ENCODE measurements at regions of chr17 and their contacts with region 1.

Region 1: DNA sequence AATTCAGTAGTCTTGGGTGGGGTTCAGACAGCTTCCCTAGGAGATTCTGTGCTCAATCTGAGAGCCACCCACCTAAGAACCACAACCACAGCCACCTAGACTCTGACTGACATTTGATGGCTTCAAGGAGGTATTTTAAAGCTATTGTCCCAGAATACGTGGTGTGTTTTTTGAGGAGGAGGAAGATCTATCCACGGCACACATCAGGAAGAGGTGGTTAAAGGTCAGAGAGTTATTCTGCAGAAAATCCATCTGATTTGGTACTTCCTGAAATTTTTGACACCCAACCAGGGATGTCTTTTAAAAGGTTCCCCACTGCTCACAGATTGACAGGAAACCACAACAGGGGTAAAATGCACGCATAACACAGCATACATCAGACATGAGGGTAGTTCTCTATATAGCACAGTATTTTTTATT is 25.1 kb downstream of the SMARCE1 start:
- DNase-seq: no peak
- ATAC-seq: no peak
- H3K4me3 ChIP-seq: no peak overlapping the region
- H3K27ac ChIP-seq: no peak overlapping the region
- H3K4me1 ChIP-seq: peaks cover 2 to 8% of the 10 kb centered on the region in 2 experiments; a peak in 3 of 4 replicates
- H3K27me3 ChIP-seq: no peaks in the 10 kb centered on the region
- CTCF ChIP-seq: no peak
- POLR2A ChIP-seq: no peak
- RAD21 ChIP-seq: no peak

Region 2: GRCh38 chr17:40098846-40099618 is 523.5 kb before region 1 on chr17:
- CTCF ChIA-PET with region 1: no interaction called
- POLR2A ChIA-PET with region 1: no interaction called
- RAD21 ChIA-PET with region 1: no interaction called
- intact Hi-C with region 1: no loop called
- DNase-seq: peak; percentile 99
- ATAC-seq: peak; percentile 76
- H3K4me3 ChIP-seq: peak overlapping the region; percentile 76 to 86
- H3K27ac ChIP-seq: peak overlapping the region; percentile 96
- H3K4me1 ChIP-seq: peaks cover 33 to 64% of the 10 kb centered on the region in 2 experiments
- H3K27me3 ChIP-seq: no peaks in the 10 kb centered on the region
- CTCF ChIP-seq: no peak
- POLR2A ChIP-seq: no peak
- RAD21 ChIP-seq: no peak

Region 3: GRCh38 chr17:40340880-40341807 is 281.4 kb before region 1 on chr17:
- CTCF ChIA-PET with region 1: no interaction called
- POLR2A ChIA-PET with region 1: no interaction called
- RAD21 ChIA-PET with region 1: no interaction called
- intact Hi-C with region 1: no loop called
- DNase-seq: peak; percentile 79
- ATAC-seq: peak; percentile 80
- H3K4me3 ChIP-seq: peak overlapping the region; percentile 60 to 68
- H3K27ac ChIP-seq: peak overlapping the region; percentile 72
- H3K4me1 ChIP-seq: peaks cover 24 to 60% of the 10 kb centered on the region in 2 experiments
- H3K27me3 ChIP-seq: no peaks in the 10 kb centered on the region
- CTCF ChIP-seq: no peak
- POLR2A ChIP-seq: no peak
- RAD21 ChIP-seq: no peak

Region 4: DNA sequence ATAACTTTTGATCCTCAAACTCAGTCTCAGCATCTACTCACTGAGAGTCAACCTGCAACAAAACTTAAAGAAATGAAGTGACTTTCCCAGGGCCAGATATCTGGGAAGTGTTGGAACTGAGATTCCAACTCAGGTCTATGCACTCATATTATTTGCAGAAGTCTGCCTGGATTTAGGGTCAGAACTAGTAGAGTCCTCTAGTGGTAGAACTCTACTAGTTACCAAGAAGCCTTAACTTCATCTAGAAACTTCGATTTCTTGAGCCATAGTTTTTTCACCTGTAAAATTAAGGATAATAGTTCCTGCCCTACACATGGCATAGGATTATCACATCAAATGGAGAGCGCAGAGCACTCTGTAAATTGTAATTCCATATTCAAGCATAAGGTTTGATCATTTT is 104.4 kb after region 1 on chr17:
- CTCF ChIA-PET with region 1: no interaction called
- POLR2A ChIA-PET with region 1: no interaction called
- RAD21 ChIA-PET with region 1: no interaction called
- intact Hi-C with region 1: loop called (anchors 2 kb)
- DNase-seq: peak; percentile 16
- ATAC-seq: peak; percentile 65
- H3K4me3 ChIP-seq: no peak overlapping the region
- H3K27ac ChIP-seq: no peak overlapping the region
- H3K4me1 ChIP-seq: no peaks in the 10 kb centered on the region
- H3K27me3 ChIP-seq: no peaks in the 10 kb centered on the region
- CTCF ChIP-seq: peak; percentile 20 to 43 (median 41); a peak in 5 of 6 replicates
- POLR2A ChIP-seq: no peak
- RAD21 ChIP-seq: peak; percentile 48

Region 5: GRCh38 chr17:40791787-40792436 is 169.4 kb after region 1 on chr17:
- CTCF ChIA-PET with region 1: interaction called, 29 read pairs
- POLR2A ChIA-PET with region 1: no interaction called
- RAD21 ChIA-PET with region 1: no interaction called
- intact Hi-C with region 1: loop called (anchors 1 kb)
- DNase-seq: peak; percentile 41
- ATAC-seq: peak; percentile 68
- H3K4me3 ChIP-seq: no peak overlapping the region
- H3K27ac ChIP-seq: no peak overlapping the region
- H3K4me1 ChIP-seq: no peaks in the 10 kb centered on the region
- H3K27me3 ChIP-seq: no peaks in the 10 kb centered on the region
- CTCF ChIP-seq: peak; percentile 66 to 86 (median 75)
- POLR2A ChIP-seq: no peak
- RAD21 ChIP-seq: peak; percentile 70

Region 6: GRCh38 chr17:41322094-41322902 is 699.8 kb after region 1 on chr17:
- CTCF ChIA-PET with region 1: no interaction called
- POLR2A ChIA-PET with region 1: no interaction called
- RAD21 ChIA-PET with region 1: no interaction called
- intact Hi-C with region 1: loop called (anchors 10 kb)
- DNase-seq: peak; percentile 35
- ATAC-seq: peak; percentile 46
- H3K4me3 ChIP-seq: no peak overlapping the region
- H3K27ac ChIP-seq: peak overlapping the region; percentile 35
- H3K4me1 ChIP-seq: peaks cover 5 to 18% of the 10 kb centered on the region in 2 experiments; a peak in 3 of 4 replicates
- H3K27me3 ChIP-seq: no peaks in the 10 kb centered on the region
- CTCF ChIP-seq: peak; percentile 52 to 67 (median 61); a peak in 5 of 6 replicates
- POLR2A ChIP-seq: no peak
- RAD21 ChIP-seq: peak; percentile 82